Endothelial cell of umbilical vein (primary cell): ENCODE measurements at regions of chr3 and their contacts with region 1.

Region 1: GRCh38 chr3:179147873-179148615 is at the start of gene PIK3CA:
- DNase-seq: peak; percentile 99
- H3K4me3 ChIP-seq: peak within 1 kb of the TSS; percentile 83 to 99 (median 93)
- H3K27ac ChIP-seq: peak within 1 kb of the TSS; percentile 75
- H3K4me1 ChIP-seq: peaks cover 15% of the 10 kb centered on the region
- H3K27me3 ChIP-seq: no peaks in the 10 kb centered on the region
- CTCF ChIP-seq: no peak
- POLR2A ChIP-seq: peak; percentile 43
- total RNA-seq, gene PIK3CA: 25.6 and 25.8 TPM in 2 replicates

Region 2: GRCh38 chr3:179071550-179072397 is 76.3 kb before region 1 on chr3 and contains the start of gene ZMAT3:
- CTCF ChIA-PET with region 1: interaction called, 4 read pairs
- POLR2A ChIA-PET with region 1: interaction called, 8 read pairs
- dilution Hi-C with region 1: no loop called
- intact Hi-C with region 1: loop called (anchors 1 kb)
- DNase-seq: peak; percentile 93
- H3K4me3 ChIP-seq: peak within 1 kb of the TSS; percentile 18 to 56 (median 53)
- H3K27ac ChIP-seq: peak within 1 kb of the TSS; percentile 81
- H3K4me1 ChIP-seq: peaks cover 10% of the 10 kb centered on the region
- H3K27me3 ChIP-seq: no peaks in the 10 kb centered on the region
- CTCF ChIP-seq: no peak
- POLR2A ChIP-seq: peak; percentile 89
- total RNA-seq, gene ZMAT3: 33.1 and 35.5 TPM in 2 replicates

Region 3: DNA sequence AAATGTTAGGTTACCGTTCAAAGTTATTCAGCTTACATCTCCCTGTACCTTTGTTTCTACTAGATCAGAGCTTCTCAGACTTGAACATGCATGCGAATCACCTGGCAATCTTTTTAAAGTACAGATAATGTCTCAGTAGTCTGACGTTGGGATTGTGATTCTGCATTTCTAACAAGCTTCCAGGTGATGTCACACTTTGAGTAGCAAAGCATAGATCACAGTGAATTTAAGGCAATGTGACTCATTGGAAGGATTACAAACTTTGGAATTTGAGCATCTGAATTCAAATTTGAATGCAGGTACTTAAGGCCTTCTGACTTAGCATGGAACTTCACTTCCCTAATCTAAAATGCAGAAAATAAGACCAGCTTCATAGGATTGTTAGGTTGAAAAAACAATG is 65.6 kb before region 1 on chr3:
- CTCF ChIA-PET with region 1: no interaction called
- POLR2A ChIA-PET with region 1: no interaction called
- dilution Hi-C with region 1: no loop called
- intact Hi-C with region 1: no loop called
- DNase-seq: no peak
- H3K4me3 ChIP-seq: no peak overlapping the region
- H3K27ac ChIP-seq: no peak overlapping the region
- H3K4me1 ChIP-seq: no peaks in the 10 kb centered on the region
- H3K27me3 ChIP-seq: peaks cover 0 to 5% of the 10 kb centered on the region in 2 experiments
- CTCF ChIP-seq: no peak
- POLR2A ChIP-seq: no peak

Region 4: GRCh38 chr3:179196098-179196497 is 48.1 kb after region 1 on chr3:
- CTCF ChIA-PET with region 1: interaction called, 4 read pairs
- POLR2A ChIA-PET with region 1: no interaction called
- dilution Hi-C with region 1: no loop called
- intact Hi-C with region 1: loop called (anchors 1 kb)
- DNase-seq: peak; percentile 78
- H3K4me3 ChIP-seq: no peak overlapping the region
- H3K27ac ChIP-seq: no peak overlapping the region
- H3K4me1 ChIP-seq: peaks cover 9% of the 10 kb centered on the region
- H3K27me3 ChIP-seq: no peaks in the 10 kb centered on the region
- CTCF ChIP-seq: no peak
- POLR2A ChIP-seq: no peak

Region 5: DNA sequence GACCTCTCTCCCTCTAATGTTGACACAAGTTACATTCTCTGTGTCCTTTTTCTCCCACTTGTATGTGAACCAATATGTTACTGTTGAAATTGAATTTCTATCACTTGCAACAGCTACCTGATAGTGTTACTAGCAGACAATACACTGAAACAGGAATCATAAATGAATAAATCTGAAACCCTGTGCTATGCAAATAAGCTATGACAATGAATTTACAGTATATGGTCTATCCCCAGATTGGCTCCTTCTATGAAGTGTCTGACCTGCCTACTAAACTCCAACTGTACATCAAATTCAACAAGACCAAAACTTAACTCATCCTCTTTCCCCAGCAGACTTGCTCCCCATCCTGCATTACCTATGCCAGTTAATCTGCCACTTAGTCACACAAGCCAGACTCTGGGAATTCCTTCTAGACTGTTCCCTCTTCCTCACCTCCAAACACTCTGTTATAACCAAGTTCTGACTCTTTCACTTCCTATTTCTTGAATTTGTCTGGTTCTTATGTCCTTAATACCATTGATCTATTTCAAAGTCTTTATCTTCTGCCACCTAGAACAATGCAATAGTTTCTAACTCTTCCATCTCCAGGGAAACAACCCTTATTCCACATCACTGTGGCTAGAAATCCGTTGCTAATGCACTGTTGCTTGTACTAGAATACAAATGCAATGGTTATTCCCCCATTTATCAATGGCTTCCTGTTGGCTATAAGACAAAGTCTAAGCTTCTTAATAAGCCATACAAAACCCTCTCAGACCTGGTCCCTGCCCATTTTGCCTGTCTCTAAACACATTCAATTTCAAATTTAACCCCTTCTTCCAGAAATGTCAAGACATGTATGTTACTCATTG is 161.4 kb after region 1 on chr3:
- CTCF ChIA-PET with region 1: interaction called, 26 read pairs
- POLR2A ChIA-PET with region 1: no interaction called
- dilution Hi-C with region 1: no loop called
- intact Hi-C with region 1: no loop called
- DNase-seq: no peak
- H3K4me3 ChIP-seq: no peak overlapping the region
- H3K27ac ChIP-seq: no peak overlapping the region
- H3K4me1 ChIP-seq: no peaks in the 10 kb centered on the region
- H3K27me3 ChIP-seq: no peaks in the 10 kb centered on the region
- CTCF ChIP-seq: no peak
- POLR2A ChIP-seq: no peak

Region 6: DNA sequence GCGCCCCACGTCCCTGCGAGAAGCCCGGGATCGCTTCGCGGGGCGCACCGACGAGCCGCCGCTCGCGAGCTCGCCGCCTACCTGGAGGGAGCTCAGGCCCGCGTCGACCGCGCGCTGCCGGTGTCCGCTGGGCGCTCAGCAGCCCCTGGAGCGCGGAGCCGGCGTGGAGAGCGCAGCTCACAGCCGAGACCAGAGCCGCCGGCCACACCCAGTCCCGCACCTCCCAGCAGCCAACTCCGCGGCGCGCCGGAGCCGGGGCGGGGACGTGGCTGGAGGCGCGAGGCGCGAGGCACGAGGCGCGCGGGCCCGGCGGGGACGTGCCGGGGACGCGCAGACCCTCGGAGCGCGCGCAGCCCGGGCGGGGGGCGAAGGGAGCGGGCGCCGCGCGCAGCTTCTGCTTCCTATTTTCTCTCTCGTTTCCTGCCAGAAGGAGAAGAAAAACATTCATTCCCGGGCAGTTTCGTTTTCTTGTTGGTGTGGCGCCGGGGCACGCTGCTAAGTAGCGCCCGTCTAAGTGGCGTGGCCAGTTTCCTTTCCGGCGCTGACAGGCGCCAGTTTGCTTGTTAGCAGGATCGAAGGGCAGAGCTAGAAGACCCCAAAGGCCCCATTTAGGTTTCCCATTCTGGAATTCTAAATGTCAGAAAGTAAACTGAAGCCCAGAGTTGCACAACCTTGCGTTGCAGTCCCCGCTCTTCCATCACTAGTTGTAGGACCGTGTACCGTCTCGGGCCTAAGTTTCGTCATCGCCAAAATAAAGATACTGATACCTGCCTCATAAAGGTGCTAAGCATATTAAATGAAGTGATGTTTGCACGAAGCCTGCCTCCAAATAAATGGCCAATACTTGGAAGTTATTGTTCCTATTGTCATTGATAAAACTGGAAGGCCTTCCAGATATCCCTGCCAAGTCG is 303.5 kb after region 1 on chr3 and contains the start of gene GNB4:
- CTCF ChIA-PET with region 1: no interaction called
- POLR2A ChIA-PET with region 1: no interaction called
- dilution Hi-C with region 1: no loop called
- intact Hi-C with region 1: loop called (anchors 5 kb)
- DNase-seq: peak; percentile 96
- H3K4me3 ChIP-seq: peak within 1 kb of the TSS; percentile 43 to 93 (median 92)
- H3K27ac ChIP-seq: peak within 1 kb of the TSS; percentile 95
- H3K4me1 ChIP-seq: peaks cover 29% of the 10 kb centered on the region
- H3K27me3 ChIP-seq: no peaks in the 10 kb centered on the region
- CTCF ChIP-seq: no peak
- POLR2A ChIP-seq: peak; percentile 87
- total RNA-seq, gene GNB4: 61.9 and 62.6 TPM in 2 replicates

Region 7: DNA sequence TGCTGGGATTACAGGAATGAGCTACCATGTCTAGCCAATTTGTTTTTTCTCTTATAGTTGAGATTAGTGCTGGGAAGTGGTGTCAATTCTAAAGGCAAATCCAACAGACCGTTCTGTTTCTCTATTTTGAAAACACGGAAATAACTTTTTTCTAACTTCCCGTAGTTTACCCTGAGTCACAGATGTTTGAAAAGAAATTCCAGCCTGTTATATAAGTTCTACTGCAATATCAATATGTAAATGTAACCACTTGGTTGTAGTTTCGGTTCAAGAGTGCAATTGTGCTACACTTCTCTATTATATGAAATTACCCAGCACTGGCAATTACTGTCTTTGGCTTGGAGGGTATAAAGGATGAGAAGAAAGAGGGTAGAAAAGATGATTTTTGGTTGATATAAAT is 325.5 kb after region 1 on chr3:
- CTCF ChIA-PET with region 1: no interaction called
- POLR2A ChIA-PET with region 1: no interaction called
- dilution Hi-C with region 1: no loop called
- intact Hi-C with region 1: no loop called
- DNase-seq: peak; percentile 86
- H3K4me3 ChIP-seq: peak overlapping the region in 1 of 3 experiments; percentile 26
- H3K27ac ChIP-seq: peak overlapping the region; percentile 68
- H3K4me1 ChIP-seq: peaks cover 7% of the 10 kb centered on the region
- H3K27me3 ChIP-seq: no peaks in the 10 kb centered on the region
- CTCF ChIP-seq: no peak
- POLR2A ChIP-seq: no peak